ENCODE measurements at regions of chr15 and their contacts with region 1.

Region 1: GRCh38 chr15:32651229-32651837 is 9.8 kb downstream of the SCG5 start:
- DNase-seq: peak; percentile 42 to 68
- H3K4me3 ChIP-seq: no peak overlapping the region
- H3K4me1 ChIP-seq: no peaks in the 10 kb centered on the region
- H3K27me3 ChIP-seq: no peaks in the 10 kb centered on the region

Region 2: DNA sequence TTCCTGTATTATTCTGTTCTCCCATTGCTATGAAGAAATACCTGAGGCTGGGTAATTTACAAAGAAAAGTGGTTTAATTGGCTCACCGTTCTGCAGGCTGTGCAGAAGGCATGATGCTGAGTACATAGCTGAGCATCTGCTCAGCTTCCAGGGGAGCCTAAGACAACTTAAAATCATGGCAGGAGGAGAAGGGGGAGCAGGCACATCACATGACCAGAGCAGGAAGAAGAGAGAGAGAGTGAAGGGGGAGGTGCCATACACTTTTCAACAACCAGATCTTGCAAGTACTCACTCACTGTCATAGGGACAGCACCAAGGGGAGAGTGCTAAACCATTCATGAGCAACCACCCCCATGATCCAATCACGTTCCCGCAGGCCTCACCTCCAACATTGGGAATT is 432.7 kb before region 1 on chr15:
- in situ Hi-C with region 1: no loop called
- DNase-seq: no peak
- H3K4me3 ChIP-seq: no peak overlapping the region
- H3K4me1 ChIP-seq: 0 out of 2 replicates have a peak, but pooled peaks cover 2% of the 10 kb centered on the region
- H3K27me3 ChIP-seq: no peaks in the 10 kb centered on the region

Region 3: GRCh38 chr15:32994810-32995424 is 343.6 kb after region 1 on chr15:
- in situ Hi-C with region 1: loop called (anchors 10 kb)
- DNase-seq: no peak
- H3K4me3 ChIP-seq: no peak overlapping the region
- H3K4me1 ChIP-seq: no peaks in the 10 kb centered on the region
- H3K27me3 ChIP-seq: peaks cover 11% of the 10 kb centered on the region

Region 4: GRCh38 chr15:33132722-33133345 is 481.5 kb after region 1 on chr15:
- in situ Hi-C with region 1: loop called (anchors 25 kb)
- DNase-seq: peak; percentile 43 to 58
- H3K4me3 ChIP-seq: no peak overlapping the region
- H3K4me1 ChIP-seq: no peaks in the 10 kb centered on the region
- H3K27me3 ChIP-seq: 0 out of 2 replicates have a peak, but pooled peaks cover 4% of the 10 kb centered on the region

Measured in HAP-1 (cell line).